Endothelial cell of umbilical vein (primary cell): ENCODE measurements at regions of chr22 and their contacts with region 1.

Region 1: DNA sequence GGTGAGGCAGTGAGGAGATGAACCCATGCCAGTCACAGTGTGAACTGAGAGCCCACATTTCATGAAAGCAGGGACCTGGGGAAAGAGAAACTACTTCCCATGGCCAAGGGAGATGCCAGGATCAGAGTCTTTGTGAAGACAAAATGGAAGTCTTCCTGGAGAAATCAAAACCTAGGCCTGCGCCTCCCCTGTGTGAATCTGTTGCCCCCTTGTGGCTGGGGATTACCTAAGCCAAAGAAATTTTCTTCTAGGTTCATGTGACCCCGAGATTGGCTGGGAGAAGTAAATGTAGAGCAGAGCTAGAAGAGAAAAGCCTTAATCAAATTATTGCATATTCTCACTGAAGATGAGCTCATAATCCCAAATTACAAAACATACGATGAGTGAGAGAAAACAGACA is 1075.3 kb downstream of the TBC1D22A start:
- DNase-seq: no peak
- H3K4me3 ChIP-seq: no peak overlapping the region
- H3K27ac ChIP-seq: no peak overlapping the region
- H3K4me1 ChIP-seq: no peaks in the 10 kb centered on the region
- H3K27me3 ChIP-seq: no peaks in the 10 kb centered on the region
- CTCF ChIP-seq: peak in 1 of 2 donors; percentile 10
- POLR2A ChIP-seq: no peak

Region 2: GRCh38 chr22:47213571-47214230 is 624.0 kb before region 1 on chr22:
- CTCF ChIA-PET with region 1: no interaction called
- POLR2A ChIA-PET with region 1: no interaction called
- dilution Hi-C with region 1: no loop called
- intact Hi-C with region 1: loop called (anchors 5 kb)
- DNase-seq: no peak
- H3K4me3 ChIP-seq: no peak overlapping the region
- H3K27ac ChIP-seq: no peak overlapping the region
- H3K4me1 ChIP-seq: no peaks in the 10 kb centered on the region
- H3K27me3 ChIP-seq: no peaks in the 10 kb centered on the region
- CTCF ChIP-seq: peak; percentile 67 to 79
- POLR2A ChIP-seq: no peak